Ascending aorta (tissue), 2 donors: ENCODE measurements at regions of chr11 and their contacts with region 1.

Region 1: DNA sequence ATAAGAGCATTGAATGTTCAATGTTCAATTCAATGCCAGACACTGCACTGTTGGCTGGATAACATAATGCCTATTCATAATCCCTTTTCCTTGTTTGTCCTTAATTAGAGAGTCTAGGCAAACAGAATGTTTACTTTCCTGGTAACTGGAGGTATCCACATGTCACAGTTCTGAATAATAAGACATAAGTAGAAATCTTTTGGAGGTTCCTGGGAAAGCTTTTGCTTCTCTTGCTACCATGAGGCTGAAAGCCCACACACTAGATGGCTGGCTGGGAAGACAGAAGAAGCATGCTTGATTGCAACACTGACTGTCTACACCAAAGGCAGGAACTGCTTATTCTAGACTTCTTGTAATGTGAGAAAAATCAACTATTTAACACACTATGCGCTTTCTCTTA is 79.5 kb downstream of the GAB2 start:
- DNase-seq: no peak
- H3K4me3 ChIP-seq: no peak overlapping the region
- H3K27ac ChIP-seq: peak overlapping the region; percentile 27 to 52
- H3K4me1 ChIP-seq: peaks cover 0 to 18% of the 10 kb centered on the region in 2 donors
- H3K27me3 ChIP-seq: no peaks in the 10 kb centered on the region
- CTCF ChIP-seq: no peak

Region 2: GRCh38 chr11:78379039-78379670 is 41.0 kb after region 1 on chr11:
- intact Hi-C with region 1: loop called (anchors 5 kb)
- DNase-seq: no peak
- H3K4me3 ChIP-seq: no peak overlapping the region
- H3K27ac ChIP-seq: no peak overlapping the region
- H3K4me1 ChIP-seq: no peaks in the 10 kb centered on the region
- H3K27me3 ChIP-seq: no peaks in the 10 kb centered on the region
- CTCF ChIP-seq: no peak